ENCODE measurements at regions of chr10 and their contacts with region 1.

Region 1: GRCh38 chr10:69914398-69915214 is 112.9 kb downstream of the COL13A1 start:
- DNase-seq: peak; percentile 56 to 95
- H3K4me3 ChIP-seq: no peak overlapping the region
- CTCF ChIP-seq: peak in 1 of 3 donors; percentile 96
- POLR2A ChIP-seq: no peak

Region 2: DNA sequence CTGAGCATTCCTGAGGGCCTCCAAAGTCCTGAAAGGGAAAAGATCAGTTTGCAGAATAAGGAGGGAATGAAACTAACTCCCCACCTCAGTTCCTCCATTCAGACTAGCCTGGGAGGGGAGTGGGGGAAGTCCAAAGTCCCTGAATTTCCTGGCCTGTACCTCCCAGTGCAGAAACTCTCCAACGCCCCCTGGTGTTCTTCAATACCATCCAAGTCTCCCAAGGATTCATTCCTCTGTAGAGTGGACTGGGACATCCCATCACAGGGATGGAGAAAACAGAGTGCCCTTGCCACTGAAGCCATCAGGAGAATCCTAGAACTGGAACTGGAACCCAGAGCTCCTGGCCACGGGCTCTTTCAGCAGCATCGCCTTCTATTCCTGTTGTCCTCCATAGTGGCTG is 114.5 kb before region 1 on chr10:
- intact Hi-C with region 1: loop called (anchors 10 kb)
- DNase-seq: peak in 1 of 2 donors; percentile 26
- H3K4me3 ChIP-seq: no peak overlapping the region
- CTCF ChIP-seq: no peak
- POLR2A ChIP-seq: no peak

Measured in lower leg skin (tissue), 4 donors.